Motor neuron (in vitro differentiated cells): ENCODE measurements at regions of chr2 and their contacts with region 1.

Region 1: DNA sequence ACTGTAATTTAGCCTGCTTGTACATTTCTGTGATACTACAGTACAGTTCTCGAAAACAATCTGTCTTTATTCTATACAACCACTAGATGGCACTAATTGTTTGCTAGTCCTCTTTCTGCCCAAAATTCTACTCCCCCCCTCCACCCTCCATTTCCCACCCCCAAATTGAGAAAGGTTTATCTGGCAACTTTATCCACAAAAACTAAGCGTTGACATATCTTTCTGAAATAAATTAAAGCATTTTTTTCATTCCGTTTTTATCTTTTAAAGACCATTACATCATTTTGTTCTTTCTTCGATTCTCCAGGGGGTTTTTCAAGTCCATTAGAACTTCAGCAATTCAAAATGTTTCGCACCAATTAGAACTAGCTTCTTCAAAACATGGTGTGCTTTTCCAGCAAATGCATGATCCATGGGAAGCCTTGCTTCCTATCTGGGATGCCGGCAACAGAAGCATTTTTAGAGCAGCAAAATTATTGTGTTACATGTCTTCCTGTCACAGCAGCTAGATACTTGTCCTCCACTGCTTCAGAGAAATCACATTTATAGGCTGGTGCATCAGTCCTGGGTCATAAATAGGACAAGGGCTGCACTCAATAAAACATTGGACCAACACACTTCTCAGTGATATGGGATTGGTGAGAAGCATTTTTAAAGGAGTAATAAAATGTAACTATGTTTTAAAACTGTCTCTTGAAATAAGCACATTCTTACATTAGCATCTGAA is 241.3 kb downstream of the PAX3 start:
- ATAC-seq: peak in 3 of 8 experiments; percentile 19 to 52 (median 39)
- H3K4me3 ChIP-seq: no peak overlapping the region
- H3K27ac ChIP-seq: no peak overlapping the region
- H3K4me1 ChIP-seq: no peaks in the 10 kb centered on the region

Region 2: DNA sequence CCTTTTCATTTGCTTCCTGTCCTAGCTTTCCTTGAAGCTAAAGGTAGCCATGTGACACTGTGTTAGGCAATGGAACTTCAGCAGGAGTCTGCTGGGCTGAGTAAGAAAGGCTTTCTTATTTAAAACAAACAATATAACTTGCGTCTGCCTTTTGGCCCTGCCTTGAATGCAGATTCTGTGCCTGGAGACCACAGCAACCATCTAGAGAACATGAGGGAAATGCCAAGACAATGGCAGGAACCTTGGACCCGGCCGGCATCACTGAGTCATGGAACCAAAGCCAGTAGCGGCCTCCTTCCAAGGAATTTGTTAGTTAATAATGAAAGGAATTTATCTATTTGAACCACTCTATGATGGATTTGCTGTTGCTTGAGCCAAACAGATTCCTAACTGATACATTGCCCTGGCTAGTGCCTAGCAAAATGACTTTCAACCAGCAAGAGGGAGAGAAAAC is 277.9 kb before region 1 on chr2:
- in situ Hi-C with region 1: no loop called
- ATAC-seq: peak in 3 of 8 experiments; percentile 15 to 87 (median 38)
- H3K4me3 ChIP-seq: no peak overlapping the region
- H3K27ac ChIP-seq: no peak overlapping the region
- H3K4me1 ChIP-seq: peaks cover 8 to 9% of the 10 kb centered on the region in 2 donors

Region 3: DNA sequence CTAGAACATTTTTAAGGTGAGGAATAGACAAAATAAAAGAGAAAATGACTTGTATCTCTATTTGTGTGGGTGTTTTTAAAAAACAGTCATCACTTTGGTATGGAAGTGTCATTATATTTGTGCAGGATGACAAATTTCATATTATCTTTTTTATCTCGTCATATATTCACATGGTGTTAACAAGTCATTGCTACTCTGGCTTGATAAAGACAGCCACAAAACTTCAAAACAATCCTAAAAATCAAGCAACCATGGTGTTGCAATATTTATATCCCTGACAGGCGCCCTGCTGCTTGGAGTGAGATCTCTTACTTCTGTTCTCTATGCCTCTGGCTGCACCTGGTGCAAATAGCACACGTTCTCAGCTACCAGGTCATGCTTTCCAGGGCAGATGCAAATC is 207.5 kb before region 1 on chr2:
- in situ Hi-C with region 1: no loop called
- ATAC-seq: no peak
- H3K4me3 ChIP-seq: no peak overlapping the region
- H3K27ac ChIP-seq: no peak overlapping the region
- H3K4me1 ChIP-seq: no peaks in the 10 kb centered on the region

Region 4: GRCh38 chr2:221948076-221948475 is 109.4 kb before region 1 on chr2:
- in situ Hi-C with region 1: no loop called
- ATAC-seq: no peak
- H3K4me3 ChIP-seq: no peak overlapping the region
- H3K27ac ChIP-seq: no peak overlapping the region
- H3K4me1 ChIP-seq: no peaks in the 10 kb centered on the region

Region 5: DNA sequence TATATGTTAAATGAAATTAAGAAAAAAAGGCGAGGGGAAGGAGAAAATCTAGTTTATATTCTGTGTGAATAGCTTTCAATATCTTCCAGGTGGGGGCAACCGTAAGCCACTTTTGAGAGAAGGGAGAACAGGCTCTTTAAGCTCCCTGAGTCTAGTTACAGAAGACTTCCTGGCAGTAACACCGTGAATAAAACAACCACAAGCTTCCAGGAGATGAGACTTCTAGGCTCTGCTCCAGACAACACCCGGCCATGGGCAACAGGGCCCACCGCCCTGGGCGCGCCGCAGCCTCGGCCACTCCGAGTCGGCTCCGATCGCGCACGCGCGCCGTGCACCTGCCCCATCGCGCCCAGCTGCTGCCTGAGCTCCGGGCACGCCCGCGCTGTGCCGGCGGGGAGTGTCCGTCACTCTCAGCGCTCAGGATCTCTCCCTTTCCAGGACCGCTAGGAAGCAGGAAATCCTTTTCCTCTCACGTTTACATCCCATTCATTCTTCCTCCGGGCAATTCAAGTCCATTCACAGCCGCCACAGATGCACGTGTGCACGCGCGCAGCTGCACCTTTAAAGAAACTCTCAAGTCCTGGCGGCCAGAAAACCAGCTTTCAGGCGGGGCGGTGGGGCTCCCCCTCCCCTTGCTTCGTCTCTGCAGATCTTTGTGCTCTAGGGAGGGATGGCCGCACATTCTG is 260.7 kb after region 1 on chr2:
- in situ Hi-C with region 1: loop called in 3 of 9 experiments (anchors 10 to 25 kb)
- ATAC-seq: peak; percentile 59 to 96 (median 73)
- H3K4me3 ChIP-seq: peak overlapping the region; percentile 30 to 44 (median 42)
- H3K27ac ChIP-seq: no peak overlapping the region
- H3K4me1 ChIP-seq: peaks cover 0 to 5% of the 10 kb centered on the region in 2 donors